Caco-2 (cell line): ENCODE measurements at regions of chr4 and their contacts with region 1.

Region 1: GRCh38 chr4:57080781-57081650 is 29.2 kb downstream of the IGFBP7 start:
- DNase-seq: peak; percentile 39 to 54
- H3K4me3 ChIP-seq: no peak overlapping the region
- H3K4me3 Mint-ChIP-seq: peak overlapping the region; percentile 20
- H3K27ac Mint-ChIP-seq: peak overlapping the region; percentile 47
- H3K4me1 ChIP-seq: peaks cover 54% of the 10 kb centered on the region
- H3K4me1 Mint-ChIP-seq: peaks cover 28% of the 10 kb centered on the region
- H3K27me3 ChIP-seq: no peaks in the 10 kb centered on the region
- H3K27me3 Mint-ChIP-seq: no peaks in the 10 kb centered on the region
- CTCF ChIP-seq: no peak

Region 2: GRCh38 chr4:57037982-57038604 is 42.9 kb before region 1 on chr4:
- CTCF ChIA-PET with region 1: interaction called, 3 read pairs
- POLR2A ChIA-PET with region 1: interaction called, 3 read pairs
- intact Hi-C with region 1: loop called (anchors 1 kb)
- DNase-seq: peak; percentile 69 to 84
- H3K4me3 ChIP-seq: no peak overlapping the region
- H3K4me3 Mint-ChIP-seq: no peak overlapping the region
- H3K27ac Mint-ChIP-seq: no peak overlapping the region
- H3K4me1 ChIP-seq: no peaks in the 10 kb centered on the region; the same call in 1 of the 2 replicates
- H3K4me1 Mint-ChIP-seq: peaks cover 13% of the 10 kb centered on the region
- H3K27me3 ChIP-seq: no peaks in the 10 kb centered on the region
- H3K27me3 Mint-ChIP-seq: no peaks in the 10 kb centered on the region
- CTCF ChIP-seq: peak; percentile 91 to 97

Region 3: GRCh38 chr4:57063518-57063917 is 17.5 kb before region 1 on chr4:
- CTCF ChIA-PET with region 1: no interaction called
- POLR2A ChIA-PET with region 1: interaction called, 3 read pairs
- intact Hi-C with region 1: loop called (anchors 2 kb)
- DNase-seq: no peak
- H3K4me3 ChIP-seq: no peak overlapping the region
- H3K4me3 Mint-ChIP-seq: no peak overlapping the region
- H3K27ac Mint-ChIP-seq: no peak overlapping the region
- H3K4me1 ChIP-seq: peaks cover 20% of the 10 kb centered on the region
- H3K4me1 Mint-ChIP-seq: peaks cover 13% of the 10 kb centered on the region
- H3K27me3 ChIP-seq: no peaks in the 10 kb centered on the region
- H3K27me3 Mint-ChIP-seq: no peaks in the 10 kb centered on the region
- CTCF ChIP-seq: no peak

Region 4: DNA sequence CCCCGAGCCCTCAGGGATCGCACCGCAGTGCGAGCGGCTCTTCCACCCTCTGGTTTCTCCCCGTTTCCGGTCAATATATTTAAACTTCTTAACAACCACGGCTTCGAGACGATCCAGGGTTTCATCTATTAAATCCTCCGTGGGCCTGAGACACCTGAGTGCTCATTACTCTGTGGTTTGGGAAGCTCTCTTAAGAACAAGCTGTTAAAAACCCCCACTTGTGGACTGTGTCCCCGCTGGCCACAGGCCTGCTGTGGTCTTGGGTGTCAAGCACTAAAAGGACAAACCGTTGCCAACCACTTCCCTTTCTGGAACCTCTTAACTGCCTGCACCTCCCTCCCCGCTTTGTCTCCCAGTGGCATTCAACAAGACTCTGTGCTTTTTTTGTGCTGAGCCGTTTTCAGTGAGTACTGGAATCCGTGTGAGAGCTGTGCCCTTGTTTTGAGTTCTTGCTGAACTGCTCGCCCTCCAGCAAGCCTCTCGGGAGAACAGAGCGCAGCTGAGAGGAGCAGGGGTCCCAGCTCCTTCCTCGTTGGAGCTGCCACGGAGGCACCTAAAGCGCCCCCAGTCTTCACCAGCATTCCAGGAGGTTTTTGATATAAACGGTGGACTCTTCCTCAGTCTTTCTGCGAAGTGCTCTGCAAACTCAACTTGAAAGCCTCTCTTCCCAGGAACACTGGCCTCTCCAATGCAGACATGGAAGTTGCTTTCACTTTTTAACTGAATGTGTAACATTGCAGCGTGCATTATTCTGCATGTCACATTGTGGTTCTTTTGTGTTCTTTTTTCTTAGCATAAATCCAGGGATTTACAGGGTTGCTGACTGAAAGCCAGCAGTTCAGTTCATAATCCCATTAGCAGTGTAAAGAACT is 29.9 kb after region 1 on chr4:
- CTCF ChIA-PET with region 1: no interaction called
- POLR2A ChIA-PET with region 1: interaction called, 3 read pairs
- intact Hi-C with region 1: loop called (anchors 1 kb)
- DNase-seq: no peak
- H3K4me3 ChIP-seq: peak overlapping the region; percentile 64
- H3K4me3 Mint-ChIP-seq: peak overlapping the region; percentile 80
- H3K27ac Mint-ChIP-seq: peak overlapping the region; percentile 87
- H3K4me1 ChIP-seq: 0 out of 2 replicates have a peak, but pooled peaks cover 3% of the 10 kb centered on the region
- H3K4me1 Mint-ChIP-seq: peaks cover 31% of the 10 kb centered on the region
- H3K27me3 ChIP-seq: no peaks in the 10 kb centered on the region
- H3K27me3 Mint-ChIP-seq: no peaks in the 10 kb centered on the region
- CTCF ChIP-seq: no peak

Region 5: DNA sequence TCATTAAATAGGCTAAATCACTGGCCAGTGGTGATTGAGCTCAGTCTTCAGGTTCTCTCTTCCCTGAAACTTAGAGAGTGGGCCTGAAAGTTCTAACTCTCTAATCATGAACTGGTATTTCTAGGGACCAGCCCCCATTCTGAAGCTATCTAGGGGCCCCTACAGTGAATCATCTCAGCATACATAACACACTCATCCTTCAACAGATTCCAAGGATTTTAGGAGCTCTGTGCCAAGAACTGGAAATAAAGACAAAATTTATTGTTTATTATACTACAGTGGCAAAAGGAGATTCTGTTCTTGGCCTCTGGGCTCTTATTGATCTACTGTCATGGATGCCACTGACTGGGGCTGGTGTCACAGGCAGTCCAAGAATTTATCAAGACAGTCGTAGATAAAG is 293.0 kb after region 1 on chr4:
- CTCF ChIA-PET with region 1: no interaction called
- POLR2A ChIA-PET with region 1: no interaction called
- intact Hi-C with region 1: no loop called
- DNase-seq: no peak
- H3K4me3 ChIP-seq: no peak overlapping the region
- H3K4me3 Mint-ChIP-seq: no peak overlapping the region
- H3K27ac Mint-ChIP-seq: no peak overlapping the region
- H3K4me1 ChIP-seq: no peaks in the 10 kb centered on the region
- H3K4me1 Mint-ChIP-seq: no peaks in the 10 kb centered on the region
- H3K27me3 ChIP-seq: 0 out of 2 replicates have a peak, but pooled peaks cover 1% of the 10 kb centered on the region
- H3K27me3 Mint-ChIP-seq: peaks cover 10% of the 10 kb centered on the region
- CTCF ChIP-seq: no peak

Region 6: GRCh38 chr4:58138786-58139668 is 1058.0 kb after region 1 on chr4:
- CTCF ChIA-PET with region 1: no interaction called
- POLR2A ChIA-PET with region 1: no interaction called
- intact Hi-C with region 1: no loop called
- DNase-seq: no peak
- H3K4me3 ChIP-seq: no peak overlapping the region
- H3K4me3 Mint-ChIP-seq: no peak overlapping the region
- H3K27ac Mint-ChIP-seq: no peak overlapping the region
- H3K4me1 ChIP-seq: no peaks in the 10 kb centered on the region
- H3K4me1 Mint-ChIP-seq: no peaks in the 10 kb centered on the region
- H3K27me3 ChIP-seq: no peaks in the 10 kb centered on the region
- H3K27me3 Mint-ChIP-seq: peaks cover 3% of the 10 kb centered on the region
- CTCF ChIP-seq: no peak